ENCODE measurements at regions of chr4 and their contacts with region 1.

Region 1: DNA sequence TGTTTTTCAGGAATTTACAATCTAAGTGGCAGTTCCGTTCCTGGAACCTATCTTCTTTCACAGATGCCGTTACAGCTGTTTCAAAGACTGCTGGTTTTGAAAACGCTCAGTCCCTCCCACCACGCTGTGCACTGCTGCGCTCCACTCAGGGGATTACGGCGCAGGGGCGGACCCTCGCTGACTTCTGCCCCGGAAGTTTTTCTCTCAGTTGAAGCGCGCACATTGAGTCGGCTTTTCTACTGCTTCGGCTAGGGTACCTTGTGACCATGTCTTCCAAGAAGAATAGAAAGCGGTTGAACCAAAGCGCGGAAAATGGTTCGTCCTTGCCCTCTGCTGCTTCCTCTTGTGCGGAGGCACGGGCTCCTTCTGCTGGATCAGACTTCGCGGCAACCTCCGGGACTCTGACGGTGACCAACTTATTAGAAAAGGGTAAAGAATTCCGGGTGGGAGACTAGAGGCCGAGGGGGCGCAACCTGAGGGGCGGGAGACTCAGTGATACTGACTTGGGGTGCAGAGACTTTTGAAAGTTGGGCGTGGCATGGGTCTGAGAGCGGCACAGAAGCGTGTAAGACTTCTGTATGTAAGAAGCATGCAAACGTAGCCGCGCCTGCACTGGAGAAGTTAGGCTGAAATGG is 597 bp upstream of the NUDT6 start:
- DNase-seq: peak; percentile 93
- H3K4me3 ChIP-seq: peak overlapping the region; percentile 93
- H3K27ac ChIP-seq: peak overlapping the region; percentile 91
- H3K4me1 ChIP-seq: peaks cover 10% of the 10 kb centered on the region
- CTCF ChIP-seq: 0 out of 2 replicates have a peak, but pooled peaks have one; percentile 9

Region 2: DNA sequence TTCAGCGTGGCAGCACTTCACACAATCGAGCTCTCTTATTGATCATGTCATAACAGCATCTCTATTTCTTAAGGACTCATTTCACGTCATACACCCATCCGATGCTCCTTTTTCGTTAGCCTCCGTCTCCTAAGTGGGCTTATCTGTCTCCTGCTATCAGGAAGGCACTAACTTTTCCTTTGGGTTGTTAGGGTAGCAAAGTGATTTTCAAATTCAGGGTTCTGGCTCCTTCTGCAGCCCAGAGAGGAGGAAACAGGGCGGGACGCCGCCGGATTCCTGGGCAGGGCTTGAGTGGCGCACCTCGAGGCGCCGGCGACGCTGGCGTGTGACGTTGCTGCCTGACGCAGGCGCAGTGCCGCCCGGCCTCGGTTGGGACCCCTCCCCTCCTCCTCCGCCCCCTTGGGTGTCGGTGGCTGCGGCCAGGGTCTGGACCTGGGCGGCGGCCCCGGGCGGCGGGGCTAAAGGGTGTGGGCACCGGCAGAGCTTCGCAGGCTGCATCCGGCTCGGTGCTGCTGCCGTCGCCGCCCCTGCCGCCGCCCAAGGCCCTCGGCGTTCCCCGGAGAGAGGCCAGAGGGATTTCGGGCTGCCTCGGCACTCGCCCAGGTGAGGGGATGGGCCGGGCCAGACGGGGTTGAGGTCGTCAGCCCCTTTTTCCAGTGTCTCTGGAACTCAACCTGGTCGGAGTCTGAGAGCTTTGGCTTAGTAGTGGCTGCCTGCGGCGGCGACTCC is 770.8 kb before region 1 on chr4 and contains the start of gene BLTP1:
- CTCF ChIA-PET with region 1: no interaction called
- POLR2A ChIA-PET with region 1: no interaction called
- intact Hi-C with region 1: loop called (anchors 2 kb)
- DNase-seq: peak; percentile 88
- H3K4me3 ChIP-seq: peak within 1 kb of the TSS; percentile 95
- H3K27ac ChIP-seq: peak within 1 kb of the TSS; percentile 49
- H3K4me1 ChIP-seq: peaks cover 21% of the 10 kb centered on the region
- CTCF ChIP-seq: no peak
- total RNA-seq, gene BLTP1: 40.3 and 41.6 TPM in 2 replicates

Region 3: DNA sequence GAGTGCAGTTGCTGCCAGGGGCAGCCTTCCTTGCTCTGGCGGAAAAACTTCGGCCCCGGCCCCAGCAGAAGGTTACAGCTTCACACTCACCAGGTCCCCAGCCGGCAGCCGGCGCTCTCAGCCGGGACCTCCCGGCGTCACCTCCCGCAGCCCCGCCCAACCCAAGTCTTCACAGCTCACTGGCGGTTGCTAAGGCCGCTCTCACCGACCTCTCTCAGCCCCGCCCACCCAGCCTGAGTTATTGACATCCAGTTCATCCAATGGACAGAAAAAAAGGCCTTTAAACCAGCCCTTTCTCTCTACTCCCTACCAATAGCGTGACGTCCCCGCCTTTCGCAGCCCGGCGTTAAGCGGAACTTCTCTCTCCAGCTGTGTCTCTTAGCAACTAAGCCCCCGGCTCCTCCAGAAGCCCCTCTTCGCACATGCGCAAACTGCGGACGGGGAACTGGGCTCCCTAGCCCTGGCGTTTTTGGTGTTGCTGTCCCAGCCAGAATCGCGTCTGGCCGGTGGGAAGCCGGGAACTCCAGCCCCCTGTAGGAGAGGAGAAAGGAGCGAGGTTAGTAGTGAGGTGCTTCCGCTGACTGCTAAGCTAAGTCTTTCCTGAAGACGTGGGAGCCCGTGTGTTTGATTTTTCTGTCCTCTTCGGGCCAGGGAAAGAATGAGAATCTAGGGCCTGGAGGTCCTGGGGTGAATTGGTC is 190.5 kb before region 1 on chr4 and contains the start of gene BBS12:
- CTCF ChIA-PET with region 1: interaction called, 4 read pairs
- POLR2A ChIA-PET with region 1: interaction called, 20 read pairs
- intact Hi-C with region 1: loop called (anchors 2 kb)
- DNase-seq: peak; percentile 99
- H3K4me3 ChIP-seq: peak within 1 kb of the TSS; percentile 79
- H3K27ac ChIP-seq: no peak within 1 kb of the TSS
- H3K4me1 ChIP-seq: peaks cover 7% of the 10 kb centered on the region
- CTCF ChIP-seq: peak; percentile 66
- total RNA-seq, gene BBS12: 1.7 and 1.8 TPM in 2 replicates

Region 4: DNA sequence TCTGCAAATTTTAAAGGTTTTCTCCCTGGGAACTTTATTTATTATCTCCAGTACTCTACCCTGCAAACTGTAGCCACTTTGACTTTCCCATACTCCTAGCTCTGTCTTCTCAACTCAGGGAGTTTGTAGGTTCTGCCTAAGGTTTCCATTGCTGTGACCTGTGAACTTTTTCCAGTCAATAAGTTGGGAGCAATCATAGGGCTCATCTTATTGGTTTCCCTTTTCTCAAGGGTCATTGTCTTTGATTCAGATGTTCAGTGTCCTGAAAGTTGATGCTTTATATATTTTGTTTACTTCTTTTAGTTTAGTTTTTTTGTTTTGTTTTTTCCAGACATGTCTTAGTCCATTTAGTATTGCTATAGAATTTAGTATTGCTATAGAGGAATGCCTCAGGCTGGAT is 84.7 kb after region 1 on chr4:
- CTCF ChIA-PET with region 1: no interaction called
- POLR2A ChIA-PET with region 1: no interaction called
- intact Hi-C with region 1: no loop called
- DNase-seq: no peak
- H3K4me3 ChIP-seq: no peak overlapping the region
- H3K27ac ChIP-seq: no peak overlapping the region
- H3K4me1 ChIP-seq: no peaks in the 10 kb centered on the region
- CTCF ChIP-seq: no peak

Region 5: GRCh38 chr4:123444290-123444731 is 521.3 kb after region 1 on chr4:
- CTCF ChIA-PET with region 1: no interaction called
- POLR2A ChIA-PET with region 1: no interaction called
- intact Hi-C with region 1: loop called (anchors 10 kb)
- DNase-seq: peak; percentile 91
- H3K4me3 ChIP-seq: peak overlapping the region; percentile 61
- H3K27ac ChIP-seq: peak overlapping the region; percentile 97
- H3K4me1 ChIP-seq: peaks cover 78% of the 10 kb centered on the region
- CTCF ChIP-seq: no peak